ENCODE measurements at regions of chr7 and their contacts with region 1.

Region 1: DNA sequence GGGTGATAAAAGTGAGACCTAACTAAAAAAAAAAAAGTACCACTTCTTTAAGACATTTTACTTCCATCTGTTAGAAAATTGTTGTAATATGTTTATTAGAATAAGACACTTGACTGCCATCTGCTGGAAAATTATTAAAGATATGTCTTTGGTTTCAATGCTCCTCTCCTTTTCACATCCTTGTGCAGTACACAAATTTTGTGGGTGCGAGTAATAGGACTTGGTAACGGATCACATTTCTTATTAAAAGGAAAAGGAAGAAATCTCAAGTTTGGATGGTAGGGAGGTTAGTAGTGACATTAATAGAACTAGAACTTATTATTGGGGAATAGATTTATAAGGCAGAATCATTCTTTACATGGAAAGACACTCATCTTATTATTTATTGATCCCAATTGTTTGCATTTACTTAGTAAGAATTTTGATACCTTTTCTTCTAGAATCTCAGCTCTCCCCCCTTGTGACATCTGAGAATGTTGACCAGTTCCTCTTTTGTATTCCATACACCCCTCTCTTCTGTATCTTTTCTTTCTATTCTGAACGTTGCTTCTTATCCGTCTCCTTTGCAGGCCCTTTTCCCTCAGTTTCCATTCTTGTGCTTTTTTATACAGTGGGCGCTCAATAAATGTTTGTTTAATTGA is 43.1 kb upstream of the RPA3 start:
- DNase-seq: no peak
- ATAC-seq: peak; percentile 61 to 87 (median 70)
- H3K4me3 ChIP-seq: peak overlapping the region; percentile 60
- H3K27ac ChIP-seq: peak overlapping the region; percentile 25
- H3K4me1 ChIP-seq: peaks cover 19% of the 10 kb centered on the region
- H3K27me3 ChIP-seq: no peaks in the 10 kb centered on the region
- CTCF ChIP-seq: peak; percentile 63

Region 2: DNA sequence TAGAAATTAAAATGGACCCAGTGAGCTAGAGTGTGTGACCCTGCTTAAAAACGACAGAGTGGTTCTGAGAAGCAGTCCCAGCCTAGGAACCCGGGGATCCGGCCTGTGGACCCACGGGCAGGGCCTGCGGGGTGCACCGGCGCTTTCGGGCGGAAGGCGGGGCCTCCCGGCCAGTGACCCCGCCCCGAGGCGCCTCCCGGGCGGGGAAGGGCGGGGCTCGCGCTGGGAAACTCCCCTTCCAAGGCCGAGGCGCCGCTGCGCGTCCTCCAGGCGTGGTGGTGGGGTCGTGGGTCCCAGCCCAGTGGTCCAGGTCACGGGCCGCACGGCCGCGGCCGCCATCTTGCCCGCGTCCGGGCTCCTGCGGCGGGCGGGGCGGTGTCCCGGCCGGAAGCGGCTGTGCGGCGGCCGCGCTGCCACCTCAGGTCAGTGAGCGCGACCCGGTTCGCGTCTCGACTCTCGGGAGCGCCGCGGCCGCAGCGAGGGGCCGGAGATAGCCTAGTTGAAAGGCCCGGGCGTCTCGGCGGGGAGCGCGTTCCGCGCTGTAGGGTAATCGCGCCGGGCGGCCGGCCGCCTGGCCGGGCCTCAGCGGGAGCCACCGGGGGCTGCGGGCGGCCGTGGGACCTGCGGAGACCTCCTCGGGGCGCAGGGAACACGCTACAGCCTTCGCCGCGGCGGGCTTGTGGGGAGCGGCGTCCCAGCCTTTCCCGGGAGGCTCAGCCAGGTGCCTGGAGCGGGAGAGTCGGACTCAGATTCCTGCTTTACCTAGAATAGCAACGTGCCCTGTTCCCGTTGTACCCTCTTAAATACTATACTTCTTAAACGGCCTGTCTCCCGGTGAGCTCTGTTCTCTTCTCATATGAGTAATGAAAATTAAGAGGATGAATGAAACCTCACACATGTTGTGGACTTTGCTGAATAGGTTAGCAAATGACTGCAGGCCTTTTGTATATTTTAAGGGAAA is 194.5 kb before region 1 on chr7 and contains the start of gene MIOS:
- intact Hi-C with region 1: loop called in 1 of 2 experiments (anchors 10 kb)
- DNase-seq: peak; percentile 91 to 95
- ATAC-seq: peak; percentile 89 to 94 (median 91)
- H3K4me3 ChIP-seq: peak within 1 kb of the TSS; percentile 92
- H3K27ac ChIP-seq: peak within 1 kb of the TSS; percentile 97
- H3K4me1 ChIP-seq: peaks cover 39% of the 10 kb centered on the region
- H3K27me3 ChIP-seq: no peaks in the 10 kb centered on the region
- CTCF ChIP-seq: no peak
- total RNA-seq, gene MIOS: 65.5 to 219 (median 105) TPM

Region 3: DNA sequence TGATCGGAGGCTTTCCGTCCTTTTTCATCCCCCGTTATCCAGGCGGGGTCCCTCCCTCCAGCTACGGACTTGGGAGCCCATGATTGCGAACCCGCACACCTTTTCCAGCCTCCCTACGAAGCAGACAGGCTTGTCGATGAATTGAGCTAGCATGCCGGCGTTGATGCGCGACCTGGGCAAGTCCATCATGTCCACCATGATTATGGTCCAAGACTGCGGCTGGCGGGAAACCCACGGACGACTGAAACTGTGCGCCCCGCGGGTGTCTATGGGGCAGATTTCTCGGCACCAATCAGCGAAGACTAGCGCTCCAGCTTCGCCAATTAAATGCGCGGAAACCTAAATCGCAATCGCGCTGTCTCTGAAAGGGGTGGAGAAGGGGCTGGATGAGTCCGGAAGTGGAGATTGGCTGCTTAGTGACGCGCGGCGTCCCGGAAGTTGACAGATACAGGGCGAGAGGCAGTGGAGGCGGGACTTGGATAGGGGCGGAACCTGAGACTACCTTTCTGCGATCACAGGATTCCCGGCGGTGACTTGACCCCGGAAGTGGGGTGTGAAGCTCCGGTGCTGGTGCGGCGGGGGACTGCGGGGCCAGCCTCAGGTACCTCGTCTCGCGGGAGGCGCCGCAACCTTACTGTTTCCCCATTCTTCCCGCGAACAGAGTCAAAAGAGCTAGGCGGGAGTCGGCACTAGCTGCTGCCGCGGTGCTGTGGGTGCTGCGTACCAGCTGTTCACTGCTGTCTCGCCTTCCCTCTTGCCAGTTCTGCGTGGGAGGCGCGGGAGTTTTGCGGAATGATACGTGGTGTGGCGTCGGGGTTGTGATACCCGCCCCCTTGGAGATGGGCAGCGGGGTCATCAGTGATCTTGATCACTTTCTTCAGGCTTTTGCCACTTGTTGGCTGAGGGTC is 121.0 kb before region 1 on chr7 and contains the start of gene UMAD1:
- intact Hi-C with region 1: loop called in 1 of 2 experiments (anchors 1 kb)
- DNase-seq: peak; percentile 98 to 99
- ATAC-seq: peak; percentile 100
- H3K4me3 ChIP-seq: peak within 1 kb of the TSS; percentile 89
- H3K27ac ChIP-seq: peak within 1 kb of the TSS; percentile 87
- H3K4me1 ChIP-seq: peaks cover 16% of the 10 kb centered on the region
- H3K27me3 ChIP-seq: no peaks in the 10 kb centered on the region
- CTCF ChIP-seq: no peak
- total RNA-seq, gene UMAD1: 10.1 to 18.3 (median 14.1) TPM

Region 4: GRCh38 chr7:7848246-7848645 is 86.8 kb after region 1 on chr7:
- intact Hi-C with region 1: no loop called
- DNase-seq: no peak
- ATAC-seq: no peak
- H3K4me3 ChIP-seq: no peak overlapping the region
- H3K27ac ChIP-seq: no peak overlapping the region
- H3K4me1 ChIP-seq: no peaks in the 10 kb centered on the region
- H3K27me3 ChIP-seq: no peaks in the 10 kb centered on the region
- CTCF ChIP-seq: no peak

Measured in psoas muscle (tissue), 8 donors.